ENCODE measurements at regions of chr4 and their contacts with region 1.

Region 1: GRCh38 chr4:129043523-129043922 is 49.8 kb downstream of the SCLT1 start:
- DNase-seq: no peak
- ATAC-seq: no peak
- H3K4me3 ChIP-seq: no peak overlapping the region
- H3K27ac ChIP-seq: no peak overlapping the region
- H3K4me1 ChIP-seq: no peaks in the 10 kb centered on the region
- H3K27me3 ChIP-seq: no peaks in the 10 kb centered on the region
- CTCF ChIP-seq: peak; percentile 22; the same call in 1 of the 2 replicates

Region 2: GRCh38 chr4:128751334-128751733 is 292.2 kb before region 1 on chr4:
- CTCF ChIA-PET with region 1: interaction called, 12 read pairs
- POLR2A ChIA-PET with region 1: no interaction called
- in situ Hi-C with region 1: no loop called
- intact Hi-C with region 1: no loop called
- DNase-seq: no peak
- ATAC-seq: no peak
- H3K4me3 ChIP-seq: no peak overlapping the region
- H3K27ac ChIP-seq: no peak overlapping the region
- H3K4me1 ChIP-seq: no peaks in the 10 kb centered on the region
- H3K27me3 ChIP-seq: no peaks in the 10 kb centered on the region
- CTCF ChIP-seq: no peak

Region 3: GRCh38 chr4:128831531-128832242 is 211.8 kb before region 1 on chr4:
- CTCF ChIA-PET with region 1: interaction called, 10 read pairs
- POLR2A ChIA-PET with region 1: no interaction called
- in situ Hi-C with region 1: no loop called
- intact Hi-C with region 1: no loop called
- DNase-seq: no peak
- ATAC-seq: no peak
- H3K4me3 ChIP-seq: no peak overlapping the region
- H3K27ac ChIP-seq: 0 out of 2 replicates have a peak overlapping the region, but pooled peaks have one; percentile 17
- H3K4me1 ChIP-seq: peaks cover 10% of the 10 kb centered on the region
- H3K27me3 ChIP-seq: no peaks in the 10 kb centered on the region
- CTCF ChIP-seq: no peak